CD8-positive, alpha-beta T cell (primary cell): ENCODE measurements at regions of chr21 and their contacts with region 1.

Region 1: DNA sequence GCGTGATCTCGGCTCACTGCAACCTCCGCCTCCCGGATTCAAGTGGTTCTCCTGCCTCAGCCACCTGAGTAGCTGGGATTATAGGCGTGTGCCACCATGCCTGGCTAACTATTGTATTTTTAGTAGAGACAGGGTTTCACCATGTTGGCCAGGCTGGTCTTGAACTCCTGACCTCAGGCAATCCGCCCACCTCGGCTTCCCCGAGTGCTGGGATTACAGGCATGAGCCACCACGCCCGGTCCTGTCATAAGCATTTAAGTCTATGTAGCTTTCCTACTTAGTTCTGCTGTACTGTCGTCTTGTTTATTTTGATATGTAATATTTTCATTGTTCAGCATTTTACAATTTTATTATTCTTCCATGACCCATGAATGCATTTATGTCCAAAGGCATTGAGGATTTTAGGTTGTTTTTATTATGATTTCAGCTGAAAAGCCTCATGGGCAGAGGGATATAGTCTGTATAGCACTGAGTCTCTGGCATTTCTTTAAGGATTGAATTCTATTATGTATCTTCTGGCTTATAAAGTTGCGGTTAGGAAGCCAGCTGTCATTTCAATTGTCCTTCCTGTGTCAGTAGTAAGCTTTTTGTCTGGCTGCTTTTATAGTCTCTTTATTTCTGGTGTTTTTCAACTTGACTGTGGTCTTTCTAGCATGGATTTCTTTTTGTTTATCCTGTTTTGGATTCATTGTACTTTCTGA is 9.2 kb downstream of the AGPAT3 start:
- DNase-seq: no peak
- ATAC-seq: no peak
- H3K4me3 ChIP-seq: no peak overlapping the region
- H3K4me3 Mint-ChIP-seq: no peak overlapping the region
- H3K27ac ChIP-seq: no peak overlapping the region
- H3K27ac Mint-ChIP-seq: peak overlapping the region; percentile 27
- H3K4me1 ChIP-seq: peaks cover under 1% of the 10 kb centered on the region
- H3K4me1 Mint-ChIP-seq: peaks cover 44% of the 10 kb centered on the region
- H3K27me3 ChIP-seq: no peaks in the 10 kb centered on the region
- H3K27me3 Mint-ChIP-seq: no peaks in the 10 kb centered on the region
- CTCF ChIP-seq: no peak

Region 2: DNA sequence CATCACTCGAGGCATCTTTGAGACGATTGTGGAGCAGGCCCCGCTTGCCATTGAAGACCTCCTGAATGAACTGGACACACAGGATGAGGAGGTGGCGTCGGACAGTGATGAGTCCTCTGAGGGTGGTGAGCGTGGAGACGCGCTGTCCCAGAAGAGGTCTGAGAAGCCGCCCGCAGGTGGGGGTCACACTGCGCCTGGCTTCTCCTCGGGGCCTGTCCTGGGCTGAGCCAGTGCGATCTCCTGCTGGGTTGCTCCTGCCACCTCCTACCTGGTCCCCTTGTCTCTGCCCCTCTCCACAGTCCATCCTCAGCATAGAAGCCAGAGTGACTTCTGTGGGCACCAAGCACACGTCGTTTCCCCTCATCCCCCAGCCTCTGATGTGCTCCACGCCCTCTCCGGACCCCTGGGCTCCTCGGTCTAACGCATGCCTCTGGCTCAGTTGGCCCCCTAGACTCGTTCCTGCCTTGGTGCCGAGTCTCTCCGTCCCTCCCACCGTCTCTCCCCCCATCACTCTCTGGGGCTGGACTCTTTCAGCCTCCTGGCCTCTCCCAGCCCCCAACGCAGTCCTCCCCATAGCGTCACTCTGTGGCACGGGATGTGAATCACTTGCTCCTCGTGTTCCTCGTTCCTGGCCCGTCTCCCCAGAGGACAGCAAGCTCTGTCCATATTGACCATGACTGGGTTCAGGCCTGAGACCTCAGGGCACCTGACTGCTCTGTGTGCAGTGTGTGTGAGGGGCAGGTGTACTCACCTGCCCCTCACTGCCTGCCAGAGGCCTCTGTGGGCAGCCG is 76.1 kb before region 1 on chr21:
- CTCF ChIA-PET with region 1: no interaction called
- POLR2A ChIA-PET with region 1: no interaction called
- intact Hi-C with region 1: no loop called
- DNase-seq: no peak
- ATAC-seq: no peak
- H3K4me3 ChIP-seq: no peak overlapping the region
- H3K4me3 Mint-ChIP-seq: no peak overlapping the region
- H3K27ac ChIP-seq: no peak overlapping the region
- H3K27ac Mint-ChIP-seq: no peak overlapping the region
- H3K4me1 ChIP-seq: no peaks in the 10 kb centered on the region
- H3K4me1 Mint-ChIP-seq: peaks cover 2% of the 10 kb centered on the region
- H3K27me3 ChIP-seq: no peaks in the 10 kb centered on the region
- H3K27me3 Mint-ChIP-seq: no peaks in the 10 kb centered on the region
- CTCF ChIP-seq: no peak

Region 3: GRCh38 chr21:43825681-43826622 is 48.3 kb before region 1 on chr21:
- CTCF ChIA-PET with region 1: no interaction called
- POLR2A ChIA-PET with region 1: no interaction called
- intact Hi-C with region 1: loop called in 1 of 2 experiments (anchors 1 kb)
- DNase-seq: no peak
- ATAC-seq: no peak
- H3K4me3 ChIP-seq: no peak overlapping the region
- H3K4me3 Mint-ChIP-seq: no peak overlapping the region
- H3K27ac ChIP-seq: no peak overlapping the region
- H3K27ac Mint-ChIP-seq: no peak overlapping the region
- H3K4me1 ChIP-seq: no peaks in the 10 kb centered on the region
- H3K4me1 Mint-ChIP-seq: no peaks in the 10 kb centered on the region
- H3K27me3 ChIP-seq: peaks cover 0 to 2% of the 10 kb centered on the region in 2 experiments
- H3K27me3 Mint-ChIP-seq: peaks cover 2% of the 10 kb centered on the region
- CTCF ChIP-seq: no peak

Region 4: GRCh38 chr21:43893536-43894205 is 19.4 kb after region 1 on chr21:
- CTCF ChIA-PET with region 1: no interaction called
- POLR2A ChIA-PET with region 1: no interaction called
- intact Hi-C with region 1: no loop called
- DNase-seq: peak in 2 of 9 experiments; percentile 22 to 50
- ATAC-seq: peak; percentile 36
- H3K4me3 ChIP-seq: peak overlapping the region; percentile 5 to 13
- H3K4me3 Mint-ChIP-seq: peak overlapping the region; percentile 79
- H3K27ac ChIP-seq: peak overlapping the region in 1 of 2 experiments; percentile 52
- H3K27ac Mint-ChIP-seq: peak overlapping the region; percentile 88
- H3K4me1 ChIP-seq: peaks cover 28% of the 10 kb centered on the region
- H3K4me1 Mint-ChIP-seq: peaks cover 49% of the 10 kb centered on the region
- H3K27me3 ChIP-seq: no peaks in the 10 kb centered on the region
- H3K27me3 Mint-ChIP-seq: no peaks in the 10 kb centered on the region
- CTCF ChIP-seq: no peak